ENCODE measurements at regions of chr3 and their contacts with region 1.

Region 1: DNA sequence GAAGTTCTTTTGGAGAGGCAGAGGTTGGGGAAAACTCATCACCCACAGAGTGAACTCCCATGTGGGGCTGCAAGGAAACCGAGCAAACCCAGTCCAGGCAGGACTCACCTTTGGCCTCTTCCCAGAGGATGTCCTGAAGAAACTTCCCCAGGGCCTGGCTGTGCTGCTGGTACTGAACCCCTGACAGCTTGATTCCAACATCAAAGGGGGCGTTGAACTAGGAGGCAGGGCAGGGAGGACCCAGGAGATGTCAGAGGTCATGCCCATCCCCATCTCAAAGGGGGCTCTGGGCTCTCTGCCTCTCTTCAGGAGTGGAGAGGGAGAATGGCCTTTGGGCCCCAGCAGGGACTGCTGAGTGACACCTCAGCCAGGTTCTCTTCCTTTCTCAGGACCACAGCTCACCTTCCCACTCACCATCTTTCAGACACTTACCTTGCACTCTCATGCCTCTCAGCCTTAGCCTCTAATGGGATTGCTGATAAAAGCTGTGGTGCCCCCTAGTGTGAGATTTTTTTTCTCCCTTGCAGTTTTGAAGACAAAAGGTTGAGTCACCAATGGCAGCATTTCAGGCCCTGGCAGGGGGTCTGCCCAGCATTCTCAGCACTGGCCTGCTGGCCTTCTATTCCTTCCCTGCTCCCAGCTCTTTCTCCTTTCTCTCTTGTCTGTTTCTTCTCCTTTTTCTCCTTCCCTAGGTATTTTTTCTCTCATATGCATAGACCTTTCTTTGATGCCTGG is 6.0 kb downstream of the GHRL start:
- DNase-seq: no peak
- H3K4me3 ChIP-seq: no peak overlapping the region
- CTCF ChIP-seq: peak; percentile 51

Region 2: GRCh38 chr3:10232137-10232536 is 54.6 kb before region 1 on chr3:
- CTCF ChIA-PET with region 1: no interaction called
- POLR2A ChIA-PET with region 1: no interaction called
- DNase-seq: no peak
- H3K4me3 ChIP-seq: no peak overlapping the region
- CTCF ChIP-seq: no peak

Region 3: GRCh38 chr3:10263646-10264363 is 23.0 kb before region 1 on chr3:
- CTCF ChIA-PET with region 1: interaction called, 36 read pairs
- POLR2A ChIA-PET with region 1: no interaction called
- DNase-seq: no peak
- H3K4me3 ChIP-seq: peak overlapping the region; percentile 12; the same call in 1 of the 2 replicates
- CTCF ChIP-seq: peak; percentile 43

Region 4: DNA sequence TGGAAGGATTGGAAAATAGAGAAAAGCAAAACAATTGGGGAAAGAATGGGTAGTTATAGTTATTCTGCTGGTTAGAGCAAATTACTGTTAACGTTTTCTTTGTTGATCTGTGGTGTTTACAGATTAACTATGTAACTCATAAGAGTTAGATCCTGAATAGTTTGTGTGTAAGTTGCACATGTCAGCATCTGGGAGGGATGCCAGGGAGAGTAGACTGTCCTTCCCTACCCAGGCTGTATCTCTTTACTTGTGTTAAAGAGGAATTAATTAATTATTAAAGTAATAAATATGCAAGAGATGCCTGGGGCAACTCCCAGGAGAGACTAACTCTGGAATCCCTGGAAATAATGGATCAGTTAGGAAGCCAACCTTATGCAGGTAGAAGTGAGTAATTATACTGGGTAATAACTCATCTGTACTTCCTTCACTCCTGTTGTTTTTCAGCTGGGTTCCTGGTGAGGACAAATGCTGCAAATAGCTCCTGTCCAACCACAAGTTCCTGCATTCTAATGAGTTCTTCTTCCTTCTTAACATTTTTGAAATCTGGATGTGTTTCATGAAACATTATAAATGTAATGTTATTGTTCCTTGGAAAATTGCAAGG is 13.0 kb before region 1 on chr3:
- CTCF ChIA-PET with region 1: interaction called, 36 read pairs
- POLR2A ChIA-PET with region 1: no interaction called
- DNase-seq: no peak
- H3K4me3 ChIP-seq: no peak overlapping the region
- CTCF ChIP-seq: no peak

Region 5: GRCh38 chr3:10570196-10570946 is 283.6 kb after region 1 on chr3:
- CTCF ChIA-PET with region 1: no interaction called
- POLR2A ChIA-PET with region 1: no interaction called
- DNase-seq: no peak
- H3K4me3 ChIP-seq: no peak overlapping the region
- CTCF ChIP-seq: no peak